Activated CD4-positive, alpha-beta memory T cell treated with anti-CD3 and anti-CD28 coated beads for 36 hours (primary cell): ENCODE measurements at regions of chr11 and their contacts with region 1.

Region 1: DNA sequence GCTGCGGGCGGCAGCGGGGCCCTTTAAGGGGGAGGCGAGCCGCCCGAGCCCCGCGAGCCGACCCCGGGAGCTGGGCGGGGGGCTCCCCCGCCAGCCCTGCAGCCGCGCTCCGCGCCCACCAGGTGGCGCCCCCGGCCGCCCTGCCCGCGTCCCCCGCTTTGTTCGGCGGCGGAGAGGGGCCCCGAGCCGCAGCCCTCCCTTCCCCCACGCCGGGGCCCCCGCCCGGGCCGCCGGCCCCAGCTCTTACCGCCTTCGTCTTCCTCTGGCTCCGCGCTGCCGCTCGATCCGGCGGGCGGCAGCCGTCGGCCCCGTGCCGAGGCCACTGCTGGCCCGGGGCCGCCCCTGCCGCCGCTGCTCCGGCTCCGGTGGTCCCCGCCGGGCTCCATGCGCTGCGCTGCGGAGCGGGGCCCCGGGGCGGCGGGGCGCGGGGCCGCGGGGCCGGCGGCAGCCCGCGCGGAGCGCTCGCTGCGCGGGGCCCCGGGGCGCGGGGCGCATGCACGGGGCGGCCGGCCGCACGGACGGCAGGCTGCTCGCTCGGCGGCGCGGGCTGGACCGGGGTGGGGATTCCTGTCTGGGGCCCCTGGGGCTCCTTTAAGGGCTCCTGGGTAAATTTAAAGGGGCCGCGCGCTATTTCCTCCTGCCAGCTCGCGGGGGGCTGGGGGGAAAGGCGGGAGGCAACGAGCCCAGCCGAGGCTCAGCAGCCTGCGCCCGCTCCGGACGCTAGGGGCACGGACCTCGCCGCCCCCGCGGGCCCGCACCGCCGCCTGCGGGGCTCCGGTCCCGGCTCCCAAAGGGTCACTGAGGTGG is at the start of gene ZFTA:
- DNase-seq: peak; percentile 65
- H3K4me3 Mint-ChIP-seq: peak within 1 kb of the TSS; percentile 80
- H3K27ac Mint-ChIP-seq: no peak within 1 kb of the TSS
- H3K4me1 Mint-ChIP-seq: peaks cover 6% of the 10 kb centered on the region
- H3K27me3 Mint-ChIP-seq: peaks cover 10% of the 10 kb centered on the region
- total RNA-seq, gene ZFTA: 1.3 to 1.5 TPM

Region 2: GRCh38 chr11:63779039-63779438 is 10.6 kb after region 1 on chr11:
- CTCF ChIA-PET with region 1: interaction called, 11 read pairs
- POLR2A ChIA-PET with region 1: no interaction called
- intact Hi-C with region 1: no loop called
- DNase-seq: no peak
- H3K4me3 Mint-ChIP-seq: no peak overlapping the region
- H3K27ac Mint-ChIP-seq: no peak overlapping the region
- H3K4me1 Mint-ChIP-seq: no peaks in the 10 kb centered on the region
- H3K27me3 Mint-ChIP-seq: peaks cover 6% of the 10 kb centered on the region

Region 3: DNA sequence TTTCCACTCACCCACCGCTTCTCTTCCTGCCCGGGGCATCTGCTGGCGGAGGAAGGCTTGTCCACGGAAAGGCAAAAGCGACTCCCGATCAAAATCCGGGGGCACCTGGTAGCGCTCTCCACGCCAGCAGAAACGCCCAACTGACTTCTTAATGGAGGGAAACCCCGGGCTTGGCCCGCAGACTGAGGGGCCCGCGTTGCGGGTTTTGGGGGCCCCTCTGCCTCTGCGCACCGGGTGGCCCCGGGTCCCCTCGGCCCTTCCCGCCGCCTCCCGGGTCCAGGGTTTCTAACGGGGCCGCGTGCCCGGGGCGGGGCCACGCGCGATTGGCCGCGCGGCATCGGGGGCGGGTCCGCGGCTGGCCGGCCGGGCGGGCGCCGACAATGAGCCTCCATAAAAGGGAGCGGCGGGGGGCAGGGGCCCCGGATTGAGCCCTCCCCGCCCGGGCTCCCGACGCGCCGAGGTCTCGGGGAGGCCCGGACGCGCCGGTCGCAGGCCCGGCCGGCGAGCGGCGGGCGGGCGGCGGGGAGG is 44.7 kb after region 1 on chr11 and contains the start of gene SPINDOC:
- CTCF ChIA-PET with region 1: interaction called, 5 read pairs
- POLR2A ChIA-PET with region 1: interaction called, 4 read pairs
- intact Hi-C with region 1: loop called (anchors 5 kb)
- DNase-seq: peak; percentile 80
- H3K4me3 Mint-ChIP-seq: peak within 1 kb of the TSS; percentile 79
- H3K27ac Mint-ChIP-seq: no peak within 1 kb of the TSS
- H3K4me1 Mint-ChIP-seq: peaks cover 26% of the 10 kb centered on the region
- H3K27me3 Mint-ChIP-seq: no peaks in the 10 kb centered on the region
- total RNA-seq, gene SPINDOC: 27.9 to 29.3 TPM

Region 4: DNA sequence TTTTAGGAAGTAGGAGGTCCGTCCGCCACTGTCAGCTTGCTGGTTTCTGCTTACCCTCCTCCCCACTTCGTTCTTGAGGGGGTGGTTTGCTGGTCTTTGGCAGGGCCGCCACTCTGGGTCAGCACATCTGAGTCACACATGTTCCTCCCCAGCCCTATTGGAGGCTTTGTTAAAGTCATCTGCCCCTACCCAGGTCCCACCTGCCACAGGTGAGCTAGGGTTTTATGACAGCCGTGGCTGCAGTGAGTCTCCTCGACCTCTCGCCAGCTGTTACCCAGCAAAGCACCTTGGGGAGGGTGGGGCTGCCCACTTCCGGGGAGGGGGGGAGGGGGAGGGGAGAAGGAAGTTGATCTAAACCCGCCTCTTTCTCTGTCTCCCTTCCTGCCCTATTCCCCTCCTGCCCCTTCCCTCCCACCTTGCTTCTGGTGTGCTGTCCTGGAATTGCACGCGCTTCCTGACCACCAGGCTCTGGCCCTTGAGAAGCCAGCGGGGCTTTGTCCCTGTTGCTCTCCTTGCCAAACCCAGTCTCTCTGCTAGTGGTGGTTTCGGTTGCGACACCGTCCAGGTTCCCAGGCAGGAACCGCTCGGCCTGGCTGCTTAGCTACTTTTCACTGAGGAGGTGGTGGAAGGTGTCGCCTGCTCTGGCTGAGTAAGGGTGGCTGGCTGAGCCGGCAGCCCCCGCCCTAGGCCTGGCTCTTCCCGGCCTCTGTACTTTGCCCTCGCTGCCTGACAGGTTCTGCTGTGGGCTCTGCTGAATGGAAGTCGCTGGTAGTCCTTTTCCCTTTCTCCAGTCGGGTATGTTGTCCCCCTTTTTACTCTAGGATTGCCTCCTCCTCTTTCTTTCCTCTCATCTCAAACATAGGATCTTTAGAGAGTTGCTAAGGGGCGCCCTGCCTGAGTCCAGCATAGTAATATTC is 120.0 kb after region 1 on chr11:
- CTCF ChIA-PET with region 1: no interaction called
- POLR2A ChIA-PET with region 1: no interaction called
- intact Hi-C with region 1: loop called (anchors 10 kb)
- DNase-seq: peak; percentile 80
- H3K4me3 Mint-ChIP-seq: peak overlapping the region; percentile 81
- H3K27ac Mint-ChIP-seq: peak overlapping the region; percentile 85
- H3K4me1 Mint-ChIP-seq: peaks cover 70% of the 10 kb centered on the region
- H3K27me3 Mint-ChIP-seq: no peaks in the 10 kb centered on the region

Region 5: DNA sequence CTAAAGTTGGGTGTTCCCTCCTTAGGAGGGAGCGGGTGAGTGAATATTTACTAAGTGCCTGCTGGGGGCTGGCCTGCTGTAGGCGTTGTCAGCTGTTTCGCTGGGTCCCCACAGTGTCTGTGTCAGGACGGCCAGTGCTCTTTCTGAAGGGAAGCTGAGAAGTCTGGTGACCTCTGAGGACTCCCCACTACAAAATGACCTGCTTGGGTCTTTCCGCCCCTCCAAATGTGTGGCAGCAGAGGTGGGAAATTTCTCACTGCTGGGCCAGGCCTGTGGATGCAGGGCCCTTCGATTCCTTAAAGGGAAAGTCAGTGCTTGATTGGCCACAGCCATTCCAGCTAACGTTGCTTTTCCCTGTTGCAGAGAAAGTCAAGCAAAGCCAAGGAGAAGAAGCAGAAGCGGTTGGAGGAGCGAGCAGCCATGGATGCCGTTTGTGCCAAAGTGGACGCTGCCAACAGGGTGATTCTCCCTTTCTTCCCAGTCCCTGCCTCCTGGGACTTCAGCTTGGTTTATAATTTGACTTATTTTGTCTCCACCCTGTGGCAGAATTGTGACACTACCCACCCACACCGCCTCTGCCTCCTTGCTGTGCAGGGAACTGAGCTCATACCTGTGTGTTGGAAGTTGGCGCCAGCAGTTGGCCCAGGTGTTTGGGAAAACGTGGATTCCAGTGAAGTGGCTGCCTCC is 177.2 kb after region 1 on chr11:
- CTCF ChIA-PET with region 1: interaction called, 11 read pairs
- POLR2A ChIA-PET with region 1: no interaction called
- intact Hi-C with region 1: loop called (anchors 5 kb)
- DNase-seq: peak; percentile 60
- H3K4me3 Mint-ChIP-seq: no peak overlapping the region
- H3K27ac Mint-ChIP-seq: no peak overlapping the region
- H3K4me1 Mint-ChIP-seq: peaks cover 5% of the 10 kb centered on the region
- H3K27me3 Mint-ChIP-seq: no peaks in the 10 kb centered on the region

Region 6: DNA sequence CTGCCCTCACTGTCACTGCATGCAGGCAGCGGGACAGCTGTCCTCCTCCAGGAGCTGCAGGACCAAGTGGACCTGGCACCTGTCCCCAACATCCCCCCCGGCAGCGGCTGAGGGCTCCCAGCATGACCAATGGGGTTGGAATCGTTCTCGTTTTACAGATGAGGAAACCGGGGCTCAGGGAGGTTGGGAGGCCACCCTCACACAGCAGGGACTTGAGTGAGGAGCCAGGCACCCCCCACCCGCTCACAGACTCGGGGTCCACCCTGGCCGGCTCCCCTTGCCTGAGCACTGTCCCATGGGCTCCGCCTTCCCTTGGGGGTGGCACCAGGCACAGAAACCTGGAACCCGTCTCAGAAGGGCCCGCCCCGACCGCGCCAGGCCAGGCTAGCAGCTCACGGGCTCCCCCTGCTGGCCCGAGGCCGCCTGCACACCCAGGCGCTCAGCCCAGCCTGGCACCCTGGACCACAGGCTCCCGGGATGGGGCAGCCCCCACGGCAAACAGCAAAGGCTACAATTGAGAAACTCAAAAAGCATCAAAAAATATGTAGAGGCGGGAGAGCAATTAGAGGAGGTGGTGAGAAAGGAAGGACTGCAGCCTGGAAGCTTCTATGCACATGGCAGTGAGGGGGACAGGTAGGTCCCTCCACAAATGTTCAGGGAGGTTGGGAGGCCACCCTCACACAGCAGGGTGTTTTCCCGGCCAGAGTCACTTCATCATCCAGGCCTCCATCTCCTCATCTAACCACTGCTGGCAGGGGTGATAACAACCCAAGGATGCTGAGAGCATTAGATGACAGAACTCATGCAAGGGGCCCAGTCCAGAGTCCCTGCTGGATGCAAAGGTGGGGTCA is 384.6 kb after region 1 on chr11:
- CTCF ChIA-PET with region 1: interaction called, 9 read pairs
- POLR2A ChIA-PET with region 1: no interaction called
- intact Hi-C with region 1: loop called (anchors 5 kb)
- DNase-seq: peak; percentile 78
- H3K4me3 Mint-ChIP-seq: no peak overlapping the region
- H3K27ac Mint-ChIP-seq: no peak overlapping the region
- H3K4me1 Mint-ChIP-seq: peaks cover 3% of the 10 kb centered on the region
- H3K27me3 Mint-ChIP-seq: no peaks in the 10 kb centered on the region